GM10248 (cell line): ENCODE measurements at regions of chr5 and their contacts with region 1.

Region 1: DNA sequence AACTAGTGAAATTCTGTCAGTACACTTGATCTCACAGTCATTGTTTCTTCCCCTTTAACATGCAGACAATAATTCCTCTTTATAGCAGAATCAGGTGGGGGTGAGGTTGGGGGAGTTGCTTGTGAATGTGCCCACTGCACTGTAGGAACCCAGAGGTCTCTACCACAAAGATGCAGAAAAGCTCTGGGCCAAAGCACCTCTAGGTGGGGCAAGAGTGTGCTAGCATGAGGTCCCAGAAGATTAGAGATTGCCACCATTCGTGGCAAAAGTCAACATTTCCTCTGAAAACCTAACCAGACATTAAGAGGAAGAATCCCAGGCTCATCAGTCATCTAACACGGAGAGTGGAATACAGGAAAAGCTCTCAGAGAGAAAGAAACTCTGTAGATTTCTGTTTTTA is 74.5 kb downstream of the PTCD2 start:
- DNase-seq: peak; percentile 53
- CTCF ChIP-seq: peak; percentile 52

Region 2: DNA sequence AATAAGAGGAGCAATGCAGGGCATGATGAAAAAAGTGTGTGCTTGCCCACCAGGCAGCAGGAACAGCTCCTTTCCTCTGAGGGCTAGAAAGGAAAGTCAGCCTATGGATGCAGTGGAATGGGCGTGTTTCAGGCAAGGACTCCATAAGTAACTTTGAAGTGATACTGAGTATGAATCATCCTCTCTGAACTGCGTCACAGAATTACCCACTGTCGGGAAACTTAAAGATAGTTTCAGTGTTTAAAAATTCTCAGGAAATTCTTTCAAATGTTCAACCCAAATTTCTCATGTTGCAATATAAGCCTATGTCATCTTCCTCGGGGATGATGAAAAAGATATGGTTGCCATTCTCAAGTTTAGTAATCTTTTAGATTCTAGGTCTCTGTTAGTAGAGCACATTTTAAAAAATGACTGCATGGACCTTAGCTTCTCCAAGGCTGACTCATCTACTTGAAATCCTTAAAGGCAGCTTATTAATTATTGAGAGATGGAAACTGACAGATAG is 46.8 kb before region 1 on chr5:
- CTCF ChIA-PET with region 1: no interaction called
- POLR2A ChIA-PET with region 1: no interaction called
- DNase-seq: no peak
- CTCF ChIP-seq: no peak

Region 3: DNA sequence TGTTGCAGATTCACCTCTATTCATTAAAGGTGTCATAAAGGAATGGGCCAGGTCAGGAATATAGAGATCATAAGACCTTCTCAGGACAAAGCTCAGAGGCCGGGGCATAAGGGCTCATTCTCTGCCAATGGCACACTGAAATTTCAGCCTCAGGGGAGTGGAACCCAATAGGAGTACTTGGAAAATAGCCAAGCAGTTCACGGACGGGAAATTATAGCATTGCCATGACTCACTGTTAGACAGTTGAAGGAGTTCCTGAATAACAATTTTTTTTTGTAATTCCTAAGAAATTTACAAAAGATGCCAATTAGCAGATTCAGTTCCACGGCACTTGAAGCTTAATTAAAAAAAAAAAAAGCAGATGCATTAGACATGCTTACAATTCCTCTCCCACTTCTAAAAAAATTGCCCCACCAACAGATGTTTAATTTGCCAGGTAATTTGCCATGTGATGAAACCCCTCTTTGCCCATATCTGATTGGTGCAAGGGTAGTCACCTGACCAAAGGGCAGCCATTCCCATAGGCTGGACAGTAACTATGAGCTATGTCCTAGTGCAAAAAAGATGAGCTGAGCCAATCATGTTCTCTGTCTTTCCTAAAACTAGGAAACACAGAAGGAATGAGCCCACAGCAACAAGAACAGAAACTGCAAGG is 15.9 kb before region 1 on chr5:
- CTCF ChIA-PET with region 1: interaction called, 15 read pairs
- POLR2A ChIA-PET with region 1: no interaction called
- DNase-seq: no peak
- CTCF ChIP-seq: no peak